ENCODE measurements at regions of chr17 and their contacts with region 1.

Region 1: DNA sequence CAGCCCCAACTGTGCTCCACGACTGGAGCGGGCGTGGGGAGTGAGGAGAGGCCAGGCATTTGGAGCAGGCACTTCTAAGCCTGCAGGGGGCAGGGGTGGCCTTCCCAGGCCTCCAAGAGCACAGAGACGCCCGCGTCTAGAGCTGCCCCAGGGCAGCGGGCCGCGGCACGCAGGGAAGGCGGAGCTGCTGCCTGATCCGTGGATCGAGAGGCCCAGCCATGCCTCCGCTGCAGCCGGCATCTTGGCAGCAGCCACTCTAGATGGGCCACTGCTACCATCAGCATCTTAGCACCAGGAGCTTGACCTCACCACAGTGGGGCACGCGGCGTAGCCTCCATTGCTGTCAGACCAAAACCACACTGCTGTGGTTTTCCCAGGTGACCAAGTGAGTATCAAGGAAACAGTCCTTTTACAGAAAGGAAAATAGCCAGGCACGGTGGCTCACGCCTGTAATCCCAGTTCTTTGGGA is 20.4 kb upstream of the WDR45B start:
- DNase-seq: peak; percentile 83 to 84
- ATAC-seq: peak; percentile 97 to 99
- H3K4me3 ChIP-seq: peak overlapping the region; percentile 7; the same call in 1 of the 3 replicates
- H3K27ac ChIP-seq: peak overlapping the region; percentile 48 to 79; a peak in 5 of 6 replicates
- H3K4me1 ChIP-seq: peaks cover 6% of the 10 kb centered on the region; the same call in 2 of the 3 replicates
- CTCF ChIP-seq: peak; percentile 89
- EP300 ChIP-seq: no peak
- POLR2A ChIP-seq: no peak
- RAD21 ChIP-seq: peak; percentile 92 to 97

Region 2: DNA sequence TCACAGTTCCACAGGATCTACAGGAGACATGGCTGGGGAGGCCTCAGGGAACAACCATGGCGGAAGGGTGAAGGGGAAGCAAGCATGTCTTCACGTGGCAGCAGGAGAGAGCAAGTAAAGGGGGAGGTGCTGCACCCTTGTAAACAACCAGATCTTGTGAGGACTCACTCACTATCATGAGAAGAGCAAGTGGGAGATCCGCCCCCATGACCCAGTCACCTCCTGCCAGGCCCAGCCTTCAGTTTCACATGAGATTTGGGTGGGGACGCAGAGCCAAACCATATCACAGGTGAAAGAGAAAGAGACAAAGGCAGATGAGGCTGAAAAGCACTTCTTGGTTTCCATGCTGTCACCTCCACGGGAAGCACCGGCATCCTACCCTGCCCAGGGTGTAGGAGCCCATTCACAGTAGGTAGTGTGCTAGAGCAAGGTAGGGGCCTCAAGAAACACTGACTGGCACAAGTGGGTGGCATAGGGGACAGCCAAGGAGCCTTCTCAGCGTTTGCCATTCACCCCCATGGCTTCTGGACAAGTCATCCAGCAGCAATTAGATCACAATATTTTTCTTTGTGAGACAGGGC is 203.6 kb before region 1 on chr17:
- CTCF ChIA-PET with region 1: no interaction called
- POLR2A ChIA-PET with region 1: no interaction called
- DNase-seq: no peak
- ATAC-seq: no peak
- H3K4me3 ChIP-seq: no peak overlapping the region
- H3K27ac ChIP-seq: no peak overlapping the region
- H3K4me1 ChIP-seq: no peaks in the 10 kb centered on the region
- CTCF ChIP-seq: no peak
- EP300 ChIP-seq: no peak
- POLR2A ChIP-seq: no peak
- RAD21 ChIP-seq: no peak

Region 3: GRCh38 chr17:82565551-82565950 is 103.1 kb before region 1 on chr17:
- CTCF ChIA-PET with region 1: no interaction called
- POLR2A ChIA-PET with region 1: no interaction called
- DNase-seq: no peak
- ATAC-seq: no peak
- H3K4me3 ChIP-seq: no peak overlapping the region
- H3K27ac ChIP-seq: no peak overlapping the region
- H3K4me1 ChIP-seq: peaks cover 61% of the 10 kb centered on the region
- CTCF ChIP-seq: no peak
- EP300 ChIP-seq: no peak
- POLR2A ChIP-seq: no peak
- RAD21 ChIP-seq: no peak

Region 4: DNA sequence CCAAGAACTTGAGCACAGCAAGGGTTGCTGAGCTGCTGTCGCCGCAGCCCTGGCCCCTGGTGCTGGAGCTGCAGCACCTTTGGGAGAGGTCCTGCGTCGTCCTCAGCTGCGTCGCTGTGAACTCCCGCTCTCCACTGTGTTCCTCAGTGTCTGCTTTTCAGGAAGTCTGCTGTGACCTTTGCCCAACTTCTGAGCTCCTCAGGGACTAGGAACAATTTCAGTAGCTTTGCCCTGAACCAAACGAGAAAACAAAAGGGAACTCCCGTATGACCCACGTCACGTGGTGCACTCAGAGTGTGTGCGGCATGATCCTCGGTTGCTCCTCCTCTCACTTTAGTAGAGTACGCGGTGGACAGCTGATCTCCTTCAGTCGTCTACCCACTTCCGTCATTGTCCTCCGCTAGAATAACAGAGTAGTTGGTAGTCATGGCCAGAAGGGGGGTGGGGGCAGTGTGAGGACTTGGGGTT is 64.7 kb before region 1 on chr17:
- CTCF ChIA-PET with region 1: no interaction called
- POLR2A ChIA-PET with region 1: no interaction called
- DNase-seq: no peak
- ATAC-seq: no peak
- H3K4me3 ChIP-seq: no peak overlapping the region
- H3K27ac ChIP-seq: no peak overlapping the region
- H3K4me1 ChIP-seq: no peaks in the 10 kb centered on the region
- CTCF ChIP-seq: no peak
- EP300 ChIP-seq: no peak
- POLR2A ChIP-seq: no peak
- RAD21 ChIP-seq: no peak

Region 5: DNA sequence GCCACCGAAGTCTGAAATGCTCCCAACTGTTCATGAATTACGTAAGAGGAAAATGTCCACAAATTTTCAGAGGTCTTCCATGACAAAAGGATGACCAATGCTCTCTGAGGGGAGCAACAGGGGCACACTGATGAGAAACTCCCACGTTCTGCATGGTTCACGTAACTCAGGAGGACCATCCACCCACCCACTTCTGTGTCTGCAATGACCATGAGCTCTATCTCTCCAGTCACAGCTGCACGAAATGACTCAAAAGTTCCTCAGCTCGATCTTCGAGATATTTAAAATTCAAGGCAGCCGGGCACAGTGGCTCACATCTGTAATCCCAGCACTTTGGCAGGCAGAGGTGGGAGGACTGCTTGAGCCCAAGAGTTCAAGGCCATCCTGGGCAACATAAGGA is 36.2 kb before region 1 on chr17:
- CTCF ChIA-PET with region 1: no interaction called
- POLR2A ChIA-PET with region 1: no interaction called
- DNase-seq: no peak
- ATAC-seq: no peak
- H3K4me3 ChIP-seq: no peak overlapping the region
- H3K27ac ChIP-seq: no peak overlapping the region
- H3K4me1 ChIP-seq: no peaks in the 10 kb centered on the region
- CTCF ChIP-seq: no peak
- EP300 ChIP-seq: no peak
- POLR2A ChIP-seq: no peak
- RAD21 ChIP-seq: no peak

Region 6: DNA sequence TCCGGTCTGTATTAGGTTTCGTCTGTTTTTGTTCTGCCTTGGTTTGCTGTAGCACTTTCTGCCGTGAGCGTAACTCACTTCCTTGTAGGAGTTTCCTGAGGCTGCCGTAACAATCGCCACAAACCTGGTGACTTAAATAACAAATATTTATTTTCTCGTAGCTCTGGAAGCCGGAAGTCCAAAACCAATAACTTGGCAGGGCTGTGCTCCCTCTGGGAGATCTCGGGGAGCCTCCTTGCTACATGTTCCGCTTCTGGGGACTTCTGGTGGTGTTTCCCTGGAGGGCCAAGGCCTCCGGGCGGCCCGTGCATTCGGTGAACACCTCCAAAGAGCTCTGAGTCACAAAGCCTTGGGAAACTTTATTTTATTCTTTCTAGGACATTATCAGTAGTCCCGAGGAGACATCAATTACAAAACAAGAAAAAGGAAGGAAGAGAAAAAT is 13.6 kb before region 1 on chr17:
- CTCF ChIA-PET with region 1: interaction called, 72 read pairs
- POLR2A ChIA-PET with region 1: no interaction called
- DNase-seq: peak in 1 of 2 experiments; percentile 48
- ATAC-seq: peak in 1 of 2 experiments; percentile 15; a peak in 1 of 6 replicates
- H3K4me3 ChIP-seq: no peak overlapping the region
- H3K27ac ChIP-seq: peak overlapping the region; percentile 7 to 30; a peak in 2 of 6 replicates
- H3K4me1 ChIP-seq: peaks cover 12% of the 10 kb centered on the region; the same call in 2 of the 3 replicates
- CTCF ChIP-seq: no peak
- EP300 ChIP-seq: no peak
- POLR2A ChIP-seq: no peak
- RAD21 ChIP-seq: no peak

Region 7: DNA sequence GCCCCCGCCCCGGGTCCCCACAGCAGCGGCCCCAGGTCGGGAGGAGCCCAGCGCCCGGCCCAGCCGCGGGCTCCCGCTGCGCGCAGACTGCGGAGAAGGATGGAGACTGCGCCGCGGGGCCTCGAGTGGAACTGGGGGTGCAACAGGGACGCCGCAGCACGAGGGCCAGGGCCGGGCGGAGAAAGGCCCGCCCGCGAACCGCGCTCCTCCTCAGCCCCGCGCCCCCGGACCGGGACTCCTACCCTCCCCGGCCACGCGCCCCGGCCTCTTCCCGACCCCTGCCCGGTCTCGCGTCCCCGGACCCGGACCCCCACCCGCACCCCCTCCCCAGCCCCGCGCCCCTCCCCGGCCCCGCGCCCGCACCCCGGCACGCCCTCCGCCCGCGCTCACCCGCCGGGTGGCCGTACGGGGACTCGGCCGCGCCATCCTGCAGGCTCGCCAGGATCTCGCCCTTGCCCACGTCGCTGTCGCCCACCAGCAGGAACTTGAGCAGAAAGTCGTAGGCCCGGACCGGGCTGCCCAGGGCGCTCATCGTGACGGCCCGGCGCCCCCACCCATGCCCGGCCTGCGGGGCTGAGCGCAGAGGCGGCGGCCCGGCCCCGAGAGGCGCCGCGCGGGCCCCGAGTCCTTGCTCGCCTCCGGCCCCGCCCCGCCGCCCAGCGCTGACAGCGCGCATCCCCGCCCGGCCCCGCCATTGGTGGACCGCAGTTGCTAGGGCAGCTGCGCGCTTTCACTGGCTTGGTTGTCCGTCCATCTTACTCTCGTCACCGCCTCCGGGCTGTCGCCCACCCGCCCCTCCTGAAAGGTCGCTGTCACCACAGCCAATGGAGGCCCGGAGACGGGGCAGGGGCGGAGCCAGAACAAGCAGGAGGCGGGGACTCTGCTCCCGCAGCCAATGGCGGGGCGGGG is 29.7 kb after region 1 on chr17 and contains the start of gene RAB40B:
- CTCF ChIA-PET with region 1: interaction called, 16 read pairs
- POLR2A ChIA-PET with region 1: interaction called, 3 read pairs
- DNase-seq: peak; percentile 99 to 100
- ATAC-seq: peak; percentile 95 to 97
- H3K4me3 ChIP-seq: peak within 1 kb of the TSS; percentile 60
- H3K27ac ChIP-seq: peak within 1 kb of the TSS; percentile 47 to 83
- H3K4me1 ChIP-seq: peaks cover 25% of the 10 kb centered on the region
- CTCF ChIP-seq: no peak
- EP300 ChIP-seq: no peak
- POLR2A ChIP-seq: no peak
- RAD21 ChIP-seq: no peak
- polyA plus RNA-seq, gene RAB40B: 5.6 and 5.8 TPM in 2 replicates

Region 8: DNA sequence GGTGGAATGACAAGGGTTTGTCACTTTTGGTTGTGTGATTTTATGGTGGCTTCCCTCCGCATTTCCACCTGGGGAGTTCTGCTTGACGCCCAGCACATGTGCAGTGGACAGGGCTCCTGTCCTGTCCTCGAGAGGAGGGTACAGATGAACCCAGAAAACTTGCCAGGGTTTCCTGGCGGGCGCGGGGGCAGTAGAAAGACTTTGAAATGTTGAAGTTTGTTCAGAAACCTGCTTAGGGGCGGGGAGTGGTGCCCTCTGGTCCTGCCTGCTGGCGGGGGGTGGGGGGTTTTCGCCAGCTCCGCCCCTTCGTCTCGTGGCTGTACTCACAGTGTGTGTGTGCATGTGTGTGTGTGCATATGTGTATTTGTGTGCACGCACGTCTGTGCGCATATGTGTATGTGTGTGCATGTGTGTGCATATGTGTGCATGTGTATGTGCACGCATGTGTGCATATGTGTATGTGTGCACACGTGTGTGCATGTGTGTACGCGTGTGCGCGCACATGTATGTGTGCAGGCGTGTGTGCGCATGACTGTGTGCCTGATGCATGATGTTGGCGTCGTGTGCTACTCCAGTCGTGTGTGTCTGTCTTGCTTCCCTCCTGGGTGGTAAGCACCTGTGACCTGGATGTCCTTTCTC is 54.6 kb after region 1 on chr17:
- CTCF ChIA-PET with region 1: interaction called, 23 read pairs
- POLR2A ChIA-PET with region 1: no interaction called
- DNase-seq: no peak
- ATAC-seq: no peak
- H3K4me3 ChIP-seq: no peak overlapping the region
- H3K27ac ChIP-seq: no peak overlapping the region
- H3K4me1 ChIP-seq: no peaks in the 10 kb centered on the region
- CTCF ChIP-seq: no peak
- EP300 ChIP-seq: no peak
- POLR2A ChIP-seq: no peak
- RAD21 ChIP-seq: no peak

Region 9: DNA sequence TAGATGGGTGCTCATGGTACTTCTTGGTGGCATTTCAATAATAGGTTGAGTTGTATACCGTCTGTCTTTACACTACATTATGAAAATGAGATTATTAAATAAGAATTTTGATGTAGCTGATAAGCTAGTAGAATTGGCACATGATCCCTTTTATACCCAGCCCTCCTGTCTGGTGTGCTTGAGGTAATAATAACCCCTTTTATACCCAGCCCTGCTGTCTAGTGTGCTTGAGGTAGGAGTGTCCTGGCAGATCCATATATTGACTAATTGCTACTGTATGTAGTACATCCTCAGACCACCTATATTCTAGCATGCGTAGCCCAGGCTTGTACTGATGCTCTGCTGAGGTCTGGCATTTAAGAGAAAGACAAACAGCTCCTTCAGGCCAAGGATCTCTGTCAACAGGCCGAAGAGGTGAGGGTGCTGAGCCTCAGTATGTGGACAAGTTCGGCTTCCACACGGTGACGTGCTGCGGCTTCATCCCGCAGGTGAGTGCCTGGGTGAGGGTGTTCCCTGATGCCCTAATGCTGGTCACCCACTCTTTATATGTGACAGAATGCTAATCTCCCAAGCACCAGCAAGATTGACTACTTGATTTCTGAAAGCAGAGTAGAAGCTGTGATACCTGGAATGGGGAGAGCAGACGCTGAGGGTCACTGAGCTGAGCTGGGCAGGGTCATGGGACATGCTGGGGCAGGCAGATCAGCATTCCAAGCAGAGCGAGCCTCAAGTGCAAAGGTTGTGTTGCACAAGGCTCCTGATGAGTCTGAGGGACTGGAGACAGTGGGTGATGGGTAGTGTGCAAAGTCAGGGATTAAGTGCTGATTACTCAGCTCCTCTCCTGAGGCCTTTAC is 72.5 kb after region 1 on chr17:
- CTCF ChIA-PET with region 1: interaction called, 18 read pairs
- POLR2A ChIA-PET with region 1: no interaction called
- DNase-seq: peak in 1 of 2 experiments; percentile 65
- ATAC-seq: no peak
- H3K4me3 ChIP-seq: no peak overlapping the region
- H3K27ac ChIP-seq: no peak overlapping the region
- H3K4me1 ChIP-seq: no peaks in the 10 kb centered on the region
- CTCF ChIP-seq: no peak
- EP300 ChIP-seq: no peak
- POLR2A ChIP-seq: no peak
- RAD21 ChIP-seq: no peak

Region 10: GRCh38 chr17:82787081-82787848 is 118.6 kb after region 1 on chr17:
- CTCF ChIA-PET with region 1: interaction called, 450 read pairs
- POLR2A ChIA-PET with region 1: no interaction called
- DNase-seq: no peak
- ATAC-seq: no peak
- H3K4me3 ChIP-seq: no peak overlapping the region
- H3K27ac ChIP-seq: no peak overlapping the region
- H3K4me1 ChIP-seq: no peaks in the 10 kb centered on the region
- CTCF ChIP-seq: no peak
- EP300 ChIP-seq: no peak
- POLR2A ChIP-seq: no peak
- RAD21 ChIP-seq: no peak

Measured in A549 (cell line).